ENCODE measurements at regions of chr2 and their contacts with region 1.

Region 1: DNA sequence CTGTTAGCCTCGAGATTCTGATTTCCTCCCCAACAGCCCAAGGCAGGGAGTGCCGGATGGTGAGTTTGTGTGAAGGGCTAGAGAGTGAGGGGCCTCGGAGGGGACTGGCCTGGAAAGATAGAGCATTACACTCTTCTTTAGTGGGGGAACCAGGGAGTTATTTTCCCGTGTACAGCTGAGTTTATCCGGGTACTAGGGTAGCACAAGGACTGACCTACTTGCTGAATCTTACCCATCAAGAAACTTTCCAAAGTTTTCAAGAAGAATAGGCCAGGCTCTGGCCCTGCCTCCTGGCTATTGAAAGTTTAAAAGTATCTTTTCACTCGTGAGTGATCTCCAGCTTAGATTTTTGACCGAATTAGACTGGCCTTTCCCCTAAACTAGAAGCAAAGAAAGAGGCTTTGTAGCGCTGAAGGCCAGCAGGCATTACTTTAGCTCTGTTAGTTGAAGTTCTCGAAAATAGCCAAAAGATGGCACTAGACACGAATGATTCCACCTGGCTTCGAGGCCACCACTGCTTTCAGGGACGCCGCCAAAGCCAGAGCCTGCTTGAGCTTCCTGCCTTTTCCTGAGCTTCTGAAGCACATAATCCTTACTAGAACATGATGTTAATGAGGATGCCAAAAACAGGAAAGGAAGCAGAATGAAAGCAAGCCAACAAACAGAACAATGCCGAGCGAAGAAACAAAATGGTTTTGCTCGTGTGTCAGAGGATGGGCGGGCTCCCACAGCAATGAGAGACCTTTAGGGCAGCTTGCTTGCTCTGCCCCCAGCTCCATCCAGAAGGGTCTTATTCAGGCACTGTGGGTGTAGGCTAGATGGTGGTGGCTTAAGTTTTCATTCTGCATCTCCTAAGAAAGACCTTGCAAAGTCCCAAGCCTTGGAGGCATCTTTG is 55.8 kb downstream of the TSN start:
- DNase-seq: peak; percentile 66
- ATAC-seq: peak; percentile 91
- H3K4me3 Mint-ChIP-seq: no peak overlapping the region
- H3K27ac Mint-ChIP-seq: no peak overlapping the region
- H3K4me1 Mint-ChIP-seq: peaks cover 44% of the 10 kb centered on the region
- H3K27me3 Mint-ChIP-seq: peaks cover 11% of the 10 kb centered on the region
- CTCF ChIP-seq: peak; percentile 21; the same call in 1 of the 2 replicates

Region 2: DNA sequence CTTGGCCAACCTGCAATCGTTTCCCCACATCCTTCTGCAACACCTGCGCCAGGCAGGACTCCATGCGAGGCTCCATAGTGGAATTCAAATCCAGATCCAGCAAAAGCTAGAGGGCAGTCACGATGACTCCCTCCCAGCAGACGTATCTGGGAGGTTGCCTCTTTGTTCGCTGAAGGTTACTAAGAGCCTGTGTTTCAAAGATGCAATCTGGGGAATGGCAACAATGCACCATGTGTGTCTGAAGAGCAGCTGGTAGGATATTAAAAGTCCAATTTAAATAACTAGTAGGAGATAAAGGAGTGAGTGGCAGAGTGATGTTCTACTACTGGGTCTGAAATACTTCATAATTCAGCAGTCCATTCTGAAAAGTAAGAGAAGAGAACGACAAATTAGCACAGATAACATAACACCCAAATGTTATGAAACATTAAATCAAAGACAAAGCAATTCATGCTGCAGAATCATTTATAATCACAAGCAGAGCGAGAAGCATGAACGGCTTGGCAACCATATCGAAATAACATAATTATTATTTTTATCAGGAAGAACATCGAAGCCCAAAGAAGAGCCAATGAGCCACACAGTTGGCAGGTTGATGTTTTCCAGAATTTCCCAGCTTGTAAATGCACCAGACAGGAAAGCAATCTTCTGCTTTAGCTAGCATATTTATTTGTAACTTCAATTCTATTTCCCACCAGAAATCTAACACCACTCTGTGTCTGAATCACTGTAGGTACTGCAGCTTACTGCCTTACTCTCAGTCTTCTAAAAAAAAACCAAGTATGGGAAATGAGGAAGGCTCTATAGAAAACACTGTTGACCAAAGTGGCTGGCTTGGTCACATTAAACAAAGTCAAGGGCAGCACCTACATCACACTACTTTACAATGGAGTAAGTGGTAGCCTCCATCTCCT is 205.1 kb before region 1 on chr2:
- CTCF ChIA-PET with region 1: no interaction called
- POLR2A ChIA-PET with region 1: no interaction called
- DNase-seq: no peak
- ATAC-seq: peak; percentile 46; the same call in 1 of the 2 replicates
- H3K4me3 Mint-ChIP-seq: no peak overlapping the region
- H3K27ac Mint-ChIP-seq: 0 out of 2 replicates have a peak overlapping the region, but pooled peaks have one; percentile 50
- H3K4me1 Mint-ChIP-seq: peaks cover 5% of the 10 kb centered on the region
- H3K27me3 Mint-ChIP-seq: no peaks in the 10 kb centered on the region
- CTCF ChIP-seq: no peak

Region 3: GRCh38 chr2:121768143-121768755 is 43.0 kb before region 1 on chr2:
- CTCF ChIA-PET with region 1: interaction called, 13 read pairs
- POLR2A ChIA-PET with region 1: no interaction called
- DNase-seq: no peak
- ATAC-seq: no peak; the same call in 1 of the 2 replicates
- H3K4me3 Mint-ChIP-seq: no peak overlapping the region
- H3K27ac Mint-ChIP-seq: peak overlapping the region; percentile 67
- H3K4me1 Mint-ChIP-seq: peaks cover 9% of the 10 kb centered on the region
- H3K27me3 Mint-ChIP-seq: no peaks in the 10 kb centered on the region
- CTCF ChIP-seq: no peak

Region 4: GRCh38 chr2:121826036-121826435 is 14.8 kb after region 1 on chr2:
- CTCF ChIA-PET with region 1: interaction called, 15 read pairs
- POLR2A ChIA-PET with region 1: no interaction called
- DNase-seq: no peak
- ATAC-seq: peak; percentile 28; the same call in 1 of the 2 replicates
- H3K4me3 Mint-ChIP-seq: no peak overlapping the region
- H3K27ac Mint-ChIP-seq: no peak overlapping the region
- H3K4me1 Mint-ChIP-seq: peaks cover 17% of the 10 kb centered on the region
- H3K27me3 Mint-ChIP-seq: no peaks in the 10 kb centered on the region
- CTCF ChIP-seq: no peak

Region 5: GRCh38 chr2:121866789-121867188 is 55.6 kb after region 1 on chr2:
- CTCF ChIA-PET with region 1: no interaction called
- POLR2A ChIA-PET with region 1: no interaction called
- DNase-seq: no peak
- ATAC-seq: no peak
- H3K4me3 Mint-ChIP-seq: no peak overlapping the region
- H3K27ac Mint-ChIP-seq: no peak overlapping the region
- H3K4me1 Mint-ChIP-seq: peaks cover 2% of the 10 kb centered on the region; the same call in 1 of the 2 replicates
- H3K27me3 Mint-ChIP-seq: peaks cover 3% of the 10 kb centered on the region
- CTCF ChIP-seq: no peak

Region 6: GRCh38 chr2:121897335-121897970 is 86.2 kb after region 1 on chr2:
- CTCF ChIA-PET with region 1: interaction called, 28 read pairs
- POLR2A ChIA-PET with region 1: no interaction called
- DNase-seq: no peak
- ATAC-seq: peak; percentile 62
- H3K4me3 Mint-ChIP-seq: no peak overlapping the region
- H3K27ac Mint-ChIP-seq: no peak overlapping the region
- H3K4me1 Mint-ChIP-seq: no peaks in the 10 kb centered on the region
- H3K27me3 Mint-ChIP-seq: no peaks in the 10 kb centered on the region
- CTCF ChIP-seq: no peak

Region 7: DNA sequence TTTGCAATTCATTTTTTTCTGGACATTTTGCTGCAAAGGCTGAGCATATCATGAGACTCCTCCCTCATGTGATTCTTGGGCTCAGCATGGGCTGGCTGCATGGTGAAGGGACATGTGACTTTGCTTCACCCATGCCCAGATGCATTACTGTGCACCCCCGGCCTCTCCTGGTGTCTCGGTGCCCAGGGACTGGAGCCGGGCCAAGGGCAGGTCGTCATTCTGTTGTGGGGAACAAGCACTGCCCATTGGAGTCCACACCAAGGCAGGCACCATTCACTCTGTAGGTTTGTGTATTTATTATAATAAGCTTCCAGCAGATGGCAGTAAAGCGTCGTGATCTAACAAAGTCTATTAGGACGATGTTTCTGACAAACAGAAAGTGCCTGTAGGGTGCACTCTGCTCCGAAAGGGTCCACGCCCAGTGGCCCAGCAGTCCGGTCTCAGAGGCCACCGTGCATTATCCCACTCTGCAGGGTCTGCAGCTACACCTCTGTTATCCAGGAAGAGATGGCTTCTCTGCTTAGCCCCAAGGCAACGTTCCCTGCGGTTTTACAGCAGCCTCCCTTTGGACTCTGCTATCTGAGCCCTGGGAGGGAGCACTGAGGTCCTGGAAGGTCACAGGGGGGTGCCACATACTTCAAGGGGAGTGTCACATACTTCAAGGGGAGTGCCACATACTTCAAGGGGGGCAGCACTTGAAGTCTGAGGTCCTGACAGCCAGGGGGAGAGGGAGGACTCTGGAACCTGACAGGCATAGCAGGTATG is 163.9 kb after region 1 on chr2:
- CTCF ChIA-PET with region 1: interaction called, 15 read pairs
- POLR2A ChIA-PET with region 1: no interaction called
- DNase-seq: peak; percentile 58
- ATAC-seq: peak; percentile 95
- H3K4me3 Mint-ChIP-seq: no peak overlapping the region
- H3K27ac Mint-ChIP-seq: no peak overlapping the region
- H3K4me1 Mint-ChIP-seq: peaks cover 31% of the 10 kb centered on the region
- H3K27me3 Mint-ChIP-seq: no peaks in the 10 kb centered on the region
- CTCF ChIP-seq: peak; percentile 42; the same call in 1 of the 2 replicates

Measured in WTC11 (cell line).